ENCODE measurements at regions of chr13 and their contacts with region 1.

Region 1: GRCh38 chr13:50365408-50366391 is 350.5 kb downstream of the KCNRG start:
- DNase-seq: peak; percentile 54
- H3K4me3 Mint-ChIP-seq: peak overlapping the region; percentile 66
- H3K27ac Mint-ChIP-seq: peak overlapping the region; percentile 75
- H3K4me1 Mint-ChIP-seq: peaks cover 48% of the 10 kb centered on the region
- H3K27me3 Mint-ChIP-seq: peaks cover 32% of the 10 kb centered on the region

Region 2: DNA sequence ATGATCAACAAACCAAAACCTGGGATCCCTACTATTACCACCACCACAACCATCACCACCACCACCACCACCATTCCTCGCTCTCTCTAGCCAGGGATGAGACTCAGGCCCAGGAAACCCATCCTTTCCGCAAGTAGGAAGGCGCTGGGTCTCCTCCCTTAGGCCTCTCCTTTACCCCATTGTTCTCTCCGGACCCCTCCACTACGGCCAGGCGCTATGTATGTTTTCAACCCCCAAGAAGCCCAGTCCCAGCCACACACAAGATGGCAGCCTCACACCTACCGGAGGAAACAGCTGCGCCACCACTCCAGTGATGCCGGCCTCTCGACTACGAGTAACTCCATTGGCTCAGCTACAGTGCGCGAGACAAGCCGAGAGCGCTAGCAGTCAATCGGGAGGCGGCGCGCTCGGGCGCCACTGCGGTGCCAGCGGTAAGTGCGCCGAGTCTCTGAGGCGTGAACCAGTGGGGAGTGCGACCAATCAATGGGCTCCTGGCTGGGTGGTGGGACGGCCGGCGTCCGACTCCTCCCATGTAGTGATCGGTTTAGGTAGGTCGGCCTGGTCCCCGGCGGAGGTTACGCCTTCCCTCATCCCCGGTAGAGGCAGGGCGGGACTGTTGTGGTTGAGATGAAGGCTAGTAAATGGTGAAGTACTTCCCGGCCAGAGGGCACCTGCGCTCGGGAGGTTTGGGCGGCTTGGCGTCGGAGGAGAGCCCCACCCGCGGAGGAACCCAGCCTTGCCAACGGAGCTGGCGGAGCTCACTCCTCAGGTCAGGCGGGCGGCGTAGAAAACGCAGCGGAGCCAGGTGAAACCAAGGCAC is 921.8 kb before region 1 on chr13 and contains the starts of genes CAB39L and SETDB2:
- intact Hi-C with region 1: loop called (anchors 10 kb)
- DNase-seq: peak; percentile 99
- H3K4me3 Mint-ChIP-seq: peak within 1 kb of the TSS; percentile 95
- H3K27ac Mint-ChIP-seq: peak within 1 kb of the TSS; percentile 99
- H3K4me1 Mint-ChIP-seq: peaks cover 66% of the 10 kb centered on the region
- H3K27me3 Mint-ChIP-seq: peaks cover 5% of the 10 kb centered on the region
- total RNA-seq, gene CAB39L: 7.0 and 7.1 TPM in 2 replicates
- total RNA-seq, gene SETDB2: 13.0 and 14.6 TPM in 2 replicates

Region 3: DNA sequence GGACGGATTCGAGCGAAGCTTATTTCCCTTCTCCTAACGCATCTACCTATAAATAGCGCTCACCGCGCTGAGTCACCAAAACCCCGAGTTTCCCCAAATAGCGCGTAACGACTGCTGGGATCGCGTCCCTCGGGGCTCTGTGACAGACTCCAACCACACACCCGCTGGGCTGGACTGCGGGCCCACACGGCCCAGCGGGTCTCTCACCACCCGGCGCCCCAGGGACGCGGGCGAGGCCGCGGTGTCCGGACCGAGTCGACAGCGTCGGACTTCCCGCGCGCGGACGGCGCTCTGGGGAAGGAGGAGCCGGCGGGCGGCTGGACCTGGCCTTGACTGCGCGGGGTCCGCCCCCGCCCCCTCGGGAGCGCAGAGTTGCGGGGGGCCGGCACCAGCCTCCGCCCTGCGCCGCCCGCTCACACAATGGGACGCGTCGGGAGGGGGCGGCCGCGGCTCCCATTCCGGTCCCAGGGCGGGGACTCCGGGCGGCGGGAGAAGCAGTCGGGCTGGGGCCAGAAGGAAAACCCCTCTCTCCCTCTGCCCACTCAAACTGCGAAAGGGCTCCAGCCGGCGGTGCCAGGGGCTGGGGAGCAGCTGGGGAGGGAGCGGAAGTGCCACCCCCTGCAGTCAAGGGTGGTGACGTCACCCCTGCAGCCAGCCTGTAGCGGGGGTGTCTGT is 241.7 kb before region 1 on chr13:
- intact Hi-C with region 1: loop called (anchors 1 kb)
- DNase-seq: peak; percentile 62
- H3K4me3 Mint-ChIP-seq: peak overlapping the region; percentile 88
- H3K27ac Mint-ChIP-seq: peak overlapping the region; percentile 91
- H3K4me1 Mint-ChIP-seq: peaks cover 50% of the 10 kb centered on the region
- H3K27me3 Mint-ChIP-seq: peaks cover 1% of the 10 kb centered on the region

Region 4: GRCh38 chr13:50236898-50237318 is 128.8 kb before region 1 on chr13:
- intact Hi-C with region 1: loop called (anchors 1 kb)
- DNase-seq: peak; percentile 45
- H3K4me3 Mint-ChIP-seq: peak overlapping the region; percentile 27
- H3K27ac Mint-ChIP-seq: peak overlapping the region; percentile 78
- H3K4me1 Mint-ChIP-seq: peaks cover 59% of the 10 kb centered on the region
- H3K27me3 Mint-ChIP-seq: peaks cover 22% of the 10 kb centered on the region

Region 5: DNA sequence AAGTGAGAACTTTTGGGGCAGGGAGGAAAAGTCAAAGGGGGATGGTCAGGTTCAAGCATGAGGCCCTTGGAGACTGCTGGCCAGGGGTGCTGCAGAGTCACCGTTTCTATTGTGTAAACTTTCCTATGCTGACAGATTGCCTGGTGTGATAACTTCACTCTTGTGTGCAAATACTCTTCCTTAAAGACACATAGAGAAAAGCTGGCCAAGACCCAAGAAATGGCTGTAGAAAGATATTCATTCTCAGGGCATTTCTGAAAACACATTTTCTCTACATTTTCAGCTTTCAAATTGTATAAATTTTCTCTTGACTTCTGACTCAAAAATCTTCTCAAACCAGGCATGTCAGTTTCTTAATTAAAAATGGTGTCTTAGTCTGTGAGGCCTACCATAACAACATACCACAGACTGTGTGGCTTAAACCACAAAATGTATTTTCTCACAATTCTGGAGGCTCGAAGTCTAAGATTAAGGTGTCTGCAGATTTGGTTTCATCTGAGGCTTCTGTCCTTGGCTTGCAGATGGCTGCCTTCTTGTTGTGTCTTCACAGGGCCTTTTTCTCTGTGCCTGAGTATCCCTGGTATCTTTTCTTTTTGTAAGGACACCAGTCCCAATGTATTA is 46.0 kb before region 1 on chr13:
- intact Hi-C with region 1: loop called (anchors 5 kb)
- DNase-seq: no peak
- H3K4me3 Mint-ChIP-seq: no peak overlapping the region
- H3K27ac Mint-ChIP-seq: no peak overlapping the region
- H3K4me1 Mint-ChIP-seq: peaks cover 22% of the 10 kb centered on the region
- H3K27me3 Mint-ChIP-seq: peaks cover 9% of the 10 kb centered on the region

Region 6: GRCh38 chr13:50387051-50387581 is 21.4 kb after region 1 on chr13:
- intact Hi-C with region 1: no loop called
- DNase-seq: no peak
- H3K4me3 Mint-ChIP-seq: no peak overlapping the region
- H3K27ac Mint-ChIP-seq: no peak overlapping the region
- H3K4me1 Mint-ChIP-seq: peaks cover 13% of the 10 kb centered on the region
- H3K27me3 Mint-ChIP-seq: peaks cover 23% of the 10 kb centered on the region

Region 7: GRCh38 chr13:50893211-50893852 is 527.6 kb after region 1 on chr13:
- intact Hi-C with region 1: loop called (anchors 2 kb)
- DNase-seq: peak; percentile 40
- H3K4me3 Mint-ChIP-seq: peak overlapping the region; percentile 77
- H3K27ac Mint-ChIP-seq: peak overlapping the region; percentile 87
- H3K4me1 Mint-ChIP-seq: peaks cover 49% of the 10 kb centered on the region
- H3K27me3 Mint-ChIP-seq: no peaks in the 10 kb centered on the region

Region 8: DNA sequence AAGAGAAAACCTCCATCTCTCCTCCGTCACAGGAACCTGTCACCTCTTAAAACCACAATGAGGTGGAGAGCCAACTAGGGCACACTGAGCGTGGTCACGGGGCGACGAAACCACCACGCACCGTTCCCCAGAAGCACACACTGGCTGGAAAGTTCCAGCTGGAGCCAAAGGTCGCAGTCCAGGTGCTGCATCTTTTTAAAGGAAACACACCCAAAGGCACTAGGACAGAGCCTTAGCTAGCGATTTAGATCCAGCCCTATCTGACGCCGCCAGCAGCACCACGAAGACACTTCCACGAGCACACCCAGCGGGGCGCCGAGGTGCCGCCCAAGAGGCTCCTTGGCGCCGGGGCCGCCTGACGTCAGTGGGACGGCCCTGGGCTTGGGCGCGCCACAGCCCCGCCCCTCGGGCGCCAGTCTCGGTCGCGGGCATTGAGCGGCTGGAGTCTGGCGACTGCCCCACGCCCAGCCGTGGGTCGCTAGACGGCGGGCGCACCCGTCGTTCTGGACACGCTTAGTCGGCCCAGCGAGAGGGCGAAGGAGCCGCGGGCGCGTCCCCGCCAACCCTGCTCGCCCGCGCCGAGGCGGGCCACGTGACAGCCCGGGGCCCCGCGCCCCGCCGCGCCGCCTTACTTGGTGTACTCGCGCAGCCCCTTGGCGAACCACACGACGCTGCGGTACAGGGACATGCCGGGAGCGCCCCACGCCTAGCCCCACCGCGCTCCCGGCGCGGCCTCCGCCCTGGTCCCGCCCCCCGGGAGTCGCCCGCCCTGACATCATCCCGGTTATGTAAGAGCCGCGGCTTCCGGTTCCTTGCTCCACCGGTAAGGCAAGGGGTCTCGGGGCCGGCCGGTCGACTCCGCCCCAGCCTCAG is 1438.0 kb after region 1 on chr13 and contains the start of gene DHRS12:
- intact Hi-C with region 1: loop called (anchors 10 kb)
- DNase-seq: peak; percentile 79
- H3K4me3 Mint-ChIP-seq: peak within 1 kb of the TSS; percentile 90
- H3K27ac Mint-ChIP-seq: peak within 1 kb of the TSS; percentile 99
- H3K4me1 Mint-ChIP-seq: peaks cover 49% of the 10 kb centered on the region
- H3K27me3 Mint-ChIP-seq: no peaks in the 10 kb centered on the region
- total RNA-seq, gene DHRS12: 3.3 and 3.5 TPM in 2 replicates